IMR-90 (cell line): ENCODE measurements at regions of chr3 and their contacts with region 1.

Region 1: DNA sequence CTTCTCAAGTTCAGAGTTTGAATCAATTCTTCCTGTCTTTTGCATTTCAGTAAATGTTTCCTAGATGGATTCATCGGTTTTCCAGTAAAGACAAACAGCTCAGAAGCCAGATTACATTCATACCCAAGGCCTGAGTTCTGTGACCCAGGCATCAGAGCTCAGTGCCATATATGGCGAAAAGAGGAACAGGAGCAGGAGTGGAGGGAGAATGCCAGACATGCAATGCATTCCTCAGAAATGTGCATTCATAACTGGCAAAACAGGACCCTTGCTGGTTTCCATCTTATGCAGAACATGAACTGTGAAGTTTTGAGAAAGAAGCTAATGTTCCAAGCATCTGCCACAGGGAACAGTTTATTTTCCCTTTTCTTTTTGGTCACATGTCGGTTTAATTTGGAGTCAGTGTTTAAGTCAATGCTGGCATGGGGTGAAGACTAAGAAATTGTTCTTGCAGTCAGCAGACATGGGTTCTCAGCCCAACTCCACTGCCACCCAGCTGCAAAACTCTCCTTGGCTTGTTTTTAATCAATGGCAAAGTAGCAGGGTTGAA is 116.5 kb downstream of the LPP start:
- DNase-seq: peak; percentile 96
- ATAC-seq: peak; percentile 50
- H3K4me3 ChIP-seq: no peak overlapping the region
- H3K27ac ChIP-seq: peak overlapping the region; percentile 96
- H3K4me1 ChIP-seq: peaks cover 45% of the 10 kb centered on the region
- H3K27me3 ChIP-seq: no peaks in the 10 kb centered on the region
- CTCF ChIP-seq: no peak
- POLR2A ChIP-seq: no peak
- RAD21 ChIP-seq: peak; percentile 33; the same call in 1 of the 2 replicates

Region 2: GRCh38 chr3:188507244-188507720 is 236.8 kb after region 1 on chr3:
- CTCF ChIA-PET with region 1: interaction called, 3 read pairs
- POLR2A ChIA-PET with region 1: no interaction called
- dilution Hi-C with region 1: no loop called
- in situ Hi-C with region 1: no loop called
- intact Hi-C with region 1: loop called (anchors 5 kb)
- DNase-seq: peak; percentile 97
- ATAC-seq: peak; percentile 82
- H3K4me3 ChIP-seq: no peak overlapping the region
- H3K27ac ChIP-seq: peak overlapping the region; percentile 23; the same call in 1 of the 2 replicates
- H3K4me1 ChIP-seq: peaks cover 11% of the 10 kb centered on the region
- H3K27me3 ChIP-seq: no peaks in the 10 kb centered on the region
- CTCF ChIP-seq: no peak
- POLR2A ChIP-seq: no peak
- RAD21 ChIP-seq: no peak; the same call in 1 of the 2 replicates

Region 3: DNA sequence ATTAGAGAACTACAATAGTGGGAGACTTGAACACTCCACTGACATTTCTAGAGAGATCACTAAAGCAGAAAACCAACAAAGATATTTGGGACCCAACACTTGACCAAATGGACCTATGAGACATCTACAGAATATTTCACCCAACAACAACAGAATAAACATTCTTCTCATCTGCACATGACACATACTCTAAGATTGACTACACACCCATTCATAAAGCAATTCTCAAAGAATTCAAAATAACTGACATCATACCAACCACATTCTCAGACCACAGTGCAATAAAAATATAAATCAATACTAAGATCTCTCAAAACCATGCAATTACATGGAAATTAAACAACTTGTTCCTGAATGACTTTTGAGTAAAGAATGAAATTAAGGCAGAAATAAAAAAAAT is 357.2 kb after region 1 on chr3:
- CTCF ChIA-PET with region 1: no interaction called
- POLR2A ChIA-PET with region 1: no interaction called
- dilution Hi-C with region 1: no loop called
- in situ Hi-C with region 1: no loop called
- intact Hi-C with region 1: loop called (anchors 5 kb)
- DNase-seq: peak; percentile 94
- ATAC-seq: peak; percentile 67
- H3K4me3 ChIP-seq: no peak overlapping the region
- H3K27ac ChIP-seq: peak overlapping the region; percentile 82; the same call in 1 of the 2 replicates
- H3K4me1 ChIP-seq: peaks cover 19% of the 10 kb centered on the region
- H3K27me3 ChIP-seq: no peaks in the 10 kb centered on the region
- CTCF ChIP-seq: no peak
- POLR2A ChIP-seq: no peak
- RAD21 ChIP-seq: no peak